ENCODE measurements at regions of chr5 and their contacts with region 1.

Region 1: DNA sequence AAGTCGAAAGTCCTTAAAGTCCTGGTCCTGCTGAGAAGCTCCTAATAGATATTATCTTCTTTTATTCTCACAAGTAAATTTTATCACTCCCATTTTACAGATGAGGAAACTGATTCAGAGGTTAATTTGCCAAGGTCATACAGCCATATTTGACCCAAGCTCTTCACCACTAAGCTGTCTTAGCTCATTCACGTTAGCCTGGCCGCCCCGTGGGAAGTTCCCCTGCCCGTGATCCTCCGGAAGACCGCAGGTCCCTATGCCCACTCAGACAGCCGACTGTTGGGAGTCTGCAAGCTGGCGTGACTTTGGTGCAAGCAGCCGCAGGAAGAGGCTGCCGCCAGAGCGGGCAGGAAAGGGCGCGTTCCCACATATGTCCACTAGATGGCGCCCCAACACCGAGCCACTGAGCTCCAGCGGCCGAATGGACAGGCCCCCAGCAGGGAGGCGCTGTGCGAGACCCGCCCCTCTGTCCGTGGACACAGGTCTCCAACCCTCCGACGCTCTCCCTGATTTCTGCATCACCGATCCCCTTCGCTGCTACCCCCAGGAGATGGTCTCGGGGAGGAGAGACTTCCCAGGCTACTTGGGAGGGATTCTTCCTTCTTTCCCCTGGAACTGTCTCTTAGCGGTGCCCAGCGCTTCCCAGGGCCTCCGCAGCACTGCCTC is 10.0 kb upstream of the ARAP3 start:
- DNase-seq: peak; percentile 71 to 74
- ATAC-seq: peak; percentile 91 to 96
- H3K4me3 ChIP-seq: peak overlapping the region; percentile 38
- H3K27ac ChIP-seq: peak overlapping the region in 1 of 2 experiments; percentile 57; a peak in 2 of 6 replicates
- H3K4me1 ChIP-seq: peaks cover 2% of the 10 kb centered on the region; the same call in 1 of the 3 replicates
- CTCF ChIP-seq: peak; percentile 98
- EP300 ChIP-seq: no peak
- POLR2A ChIP-seq: no peak
- RAD21 ChIP-seq: peak; percentile 95 to 99

Region 2: GRCh38 chr5:141402553-141403260 is 289.3 kb before region 1 on chr5 and contains the start of gene PCDHGA9:
- CTCF ChIA-PET with region 1: no interaction called
- POLR2A ChIA-PET with region 1: no interaction called
- DNase-seq: no peak
- ATAC-seq: no peak
- H3K4me3 ChIP-seq: no peak within 1 kb of the TSS
- H3K27ac ChIP-seq: no peak within 1 kb of the TSS
- H3K4me1 ChIP-seq: no peaks in the 10 kb centered on the region
- CTCF ChIP-seq: no peak
- EP300 ChIP-seq: no peak
- POLR2A ChIP-seq: no peak
- RAD21 ChIP-seq: no peak
- polyA plus RNA-seq, gene PCDHGA9: 0.22 and 0.40 TPM in 2 replicates

Region 3: GRCh38 chr5:141657937-141658545 is 34.0 kb before region 1 on chr5:
- CTCF ChIA-PET with region 1: interaction called, 11 read pairs
- POLR2A ChIA-PET with region 1: no interaction called
- DNase-seq: peak; percentile 63 to 70
- ATAC-seq: peak; percentile 32 to 44; a peak in 3 of 6 replicates
- H3K4me3 ChIP-seq: no peak overlapping the region
- H3K27ac ChIP-seq: no peak overlapping the region
- H3K4me1 ChIP-seq: peaks cover 9% of the 10 kb centered on the region
- CTCF ChIP-seq: no peak
- EP300 ChIP-seq: no peak
- POLR2A ChIP-seq: no peak
- RAD21 ChIP-seq: no peak

Region 4: DNA sequence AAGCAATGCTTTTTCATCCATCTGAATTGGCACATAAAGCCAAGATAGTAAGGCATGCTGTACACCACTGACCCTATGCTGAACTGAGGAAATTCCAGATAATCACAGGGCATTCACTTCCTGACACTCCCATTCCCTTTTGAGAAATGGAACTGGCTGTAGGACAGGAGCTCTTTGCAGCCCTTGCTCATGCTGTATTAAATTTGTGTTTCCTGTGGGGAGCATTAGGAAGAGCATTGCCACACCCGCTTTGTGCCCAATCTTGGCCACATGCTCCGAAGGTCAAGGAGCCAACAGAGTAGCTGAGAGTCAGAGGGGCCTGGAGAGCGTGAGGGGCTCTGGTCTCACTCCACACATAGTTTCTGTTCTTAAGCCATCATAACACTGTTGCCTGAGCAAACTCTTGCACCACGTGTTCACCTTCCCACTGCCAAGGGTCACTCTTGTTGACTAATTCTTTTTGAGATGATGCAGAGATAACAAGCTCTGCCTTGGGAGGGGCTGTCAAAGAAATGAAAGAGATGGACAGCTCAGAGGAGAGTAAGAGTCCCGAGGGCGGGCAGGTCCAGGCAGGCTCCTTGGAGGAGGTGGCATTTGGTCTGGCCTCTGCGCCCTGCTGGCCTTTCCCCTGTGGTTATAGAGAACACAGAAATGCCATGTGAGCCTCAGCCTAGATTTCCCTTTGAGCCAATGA is 21.8 kb after region 1 on chr5:
- CTCF ChIA-PET with region 1: interaction called, 26 read pairs
- POLR2A ChIA-PET with region 1: no interaction called
- DNase-seq: peak in 1 of 2 experiments; percentile 60
- ATAC-seq: peak; percentile 40 to 68; a peak in 5 of 6 replicates
- H3K4me3 ChIP-seq: no peak overlapping the region
- H3K27ac ChIP-seq: peak overlapping the region; percentile 22 to 45; a peak in 4 of 6 replicates
- H3K4me1 ChIP-seq: peaks cover 21% of the 10 kb centered on the region
- CTCF ChIP-seq: no peak
- EP300 ChIP-seq: no peak
- POLR2A ChIP-seq: no peak
- RAD21 ChIP-seq: no peak

Region 5: GRCh38 chr5:141914199-141914743 is 222.3 kb after region 1 on chr5:
- CTCF ChIA-PET with region 1: interaction called, 13 read pairs
- POLR2A ChIA-PET with region 1: no interaction called
- DNase-seq: no peak
- ATAC-seq: peak in 1 of 2 experiments; percentile 58; a peak in 3 of 6 replicates
- H3K4me3 ChIP-seq: no peak overlapping the region
- H3K27ac ChIP-seq: no peak overlapping the region
- H3K4me1 ChIP-seq: no peaks in the 10 kb centered on the region
- CTCF ChIP-seq: no peak
- EP300 ChIP-seq: no peak
- POLR2A ChIP-seq: no peak
- RAD21 ChIP-seq: peak in 1 of 2 experiments; percentile 28; a peak in 2 of 5 replicates

Region 6: GRCh38 chr5:141968914-141969608 is 277.1 kb after region 1 on chr5 and contains the start of gene RNF14:
- CTCF ChIA-PET with region 1: interaction called, 325 read pairs
- POLR2A ChIA-PET with region 1: interaction called, 11 read pairs
- DNase-seq: peak; percentile 86 to 94
- ATAC-seq: peak; percentile 96 to 99
- H3K4me3 ChIP-seq: peak within 1 kb of the TSS; percentile 85
- H3K27ac ChIP-seq: peak within 1 kb of the TSS; percentile 94 to 96
- H3K4me1 ChIP-seq: peaks cover 22% of the 10 kb centered on the region
- CTCF ChIP-seq: peak; percentile 89
- EP300 ChIP-seq: no peak
- POLR2A ChIP-seq: peak; percentile 78
- RAD21 ChIP-seq: 0 out of 5 replicates have a peak, but pooled peaks of 1 of the 2 experiments have one; percentile 4
- polyA plus RNA-seq, gene RNF14: 47.4 and 57.5 TPM in 2 replicates

Region 7: GRCh38 chr5:142145106-142145900 is 453.3 kb after region 1 on chr5:
- CTCF ChIA-PET with region 1: interaction called, 13 read pairs
- POLR2A ChIA-PET with region 1: no interaction called
- DNase-seq: peak; percentile 57 to 73
- ATAC-seq: peak; percentile 93 to 97
- H3K4me3 ChIP-seq: no peak overlapping the region
- H3K27ac ChIP-seq: no peak overlapping the region
- H3K4me1 ChIP-seq: no peaks in the 10 kb centered on the region
- CTCF ChIP-seq: peak; percentile 72
- EP300 ChIP-seq: no peak
- POLR2A ChIP-seq: no peak
- RAD21 ChIP-seq: peak; percentile 35 to 59; a peak in 3 of 5 replicates